ENCODE measurements at regions of chr13 and their contacts with region 1.

Region 1: DNA sequence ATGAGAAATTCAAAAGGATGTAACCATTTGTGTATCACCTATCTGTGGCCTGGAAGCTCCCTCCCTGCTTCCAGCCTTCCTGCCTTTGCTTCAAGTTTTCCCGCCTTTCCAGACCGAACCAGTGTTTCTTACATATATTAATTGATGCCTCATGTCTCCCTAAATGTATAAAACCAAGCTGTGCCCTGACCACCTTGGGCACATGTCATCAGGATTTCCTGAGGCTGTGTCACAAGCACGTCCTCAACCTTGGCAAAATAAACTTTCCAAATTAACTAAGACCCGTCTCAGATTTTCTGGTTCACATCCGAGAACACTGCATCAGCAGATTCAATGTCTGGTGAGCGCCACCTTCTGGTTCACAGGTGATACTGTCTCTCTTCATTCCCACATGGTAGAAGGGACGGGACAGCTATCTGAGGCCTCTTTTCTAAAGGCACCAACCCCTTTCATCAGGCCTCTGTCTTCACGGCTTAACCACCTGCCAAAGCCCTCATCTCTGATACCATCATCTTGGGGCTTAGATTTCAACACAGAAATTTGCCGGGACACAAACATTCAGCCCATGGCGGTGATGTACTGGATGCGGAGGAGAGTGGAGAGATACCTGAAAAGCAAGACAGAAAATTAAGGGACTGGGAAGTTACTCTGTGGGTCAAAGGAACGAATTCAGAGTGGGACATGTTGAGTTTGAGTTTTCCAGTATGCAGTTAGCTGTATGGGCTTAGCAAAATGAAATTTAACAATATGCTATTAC is 58.7 kb upstream of the PABPC3 start:
- DNase-seq: peak in 8 of 9 experiments; percentile 11 to 66 (median 36)
- ATAC-seq: peak; percentile 36
- H3K4me3 ChIP-seq: no peak overlapping the region
- H3K4me3 Mint-ChIP-seq: no peak overlapping the region
- H3K27ac ChIP-seq: no peak overlapping the region
- H3K27ac Mint-ChIP-seq: no peak overlapping the region
- H3K4me1 ChIP-seq: no peaks in the 10 kb centered on the region
- H3K4me1 Mint-ChIP-seq: no peaks in the 10 kb centered on the region
- H3K27me3 ChIP-seq: peaks cover 0 to 2% of the 10 kb centered on the region in 2 experiments
- H3K27me3 Mint-ChIP-seq: peaks cover 37% of the 10 kb centered on the region
- CTCF ChIP-seq: peak; percentile 61

Region 2: DNA sequence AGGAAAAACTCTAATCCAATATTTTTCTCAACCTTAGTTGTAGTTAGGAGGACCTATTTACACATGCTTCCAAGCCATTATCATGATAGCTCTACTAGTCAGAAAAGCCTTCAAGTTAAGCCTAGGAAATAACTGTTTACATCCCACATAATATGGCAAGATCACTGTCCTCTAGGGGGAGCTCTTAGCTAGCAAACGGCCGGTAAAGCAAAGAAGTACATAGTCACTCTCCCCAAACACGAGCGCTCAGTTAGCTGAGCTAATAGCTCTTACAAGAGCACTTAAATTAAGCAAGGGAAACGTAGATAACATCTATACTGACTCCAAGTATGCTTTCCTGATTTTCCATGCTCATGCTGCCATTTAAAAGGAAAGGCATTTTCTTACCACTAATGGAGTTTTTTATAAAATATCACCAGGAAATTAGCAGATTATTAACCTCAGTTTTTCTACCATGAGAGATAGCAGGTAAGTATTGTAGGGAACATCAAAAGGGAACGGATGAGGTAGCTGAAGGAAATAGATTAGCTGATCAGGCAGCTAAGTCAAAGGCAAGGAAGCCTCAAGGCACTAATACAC is 41.9 kb before region 1 on chr13:
- CTCF ChIA-PET with region 1: interaction called, 4 read pairs
- POLR2A ChIA-PET with region 1: interaction called, 3 read pairs
- intact Hi-C with region 1: loop called (anchors 2 kb)
- DNase-seq: peak in 8 of 9 experiments; percentile 28 to 77 (median 60)
- ATAC-seq: peak; percentile 52
- H3K4me3 ChIP-seq: no peak overlapping the region
- H3K4me3 Mint-ChIP-seq: no peak overlapping the region
- H3K27ac ChIP-seq: no peak overlapping the region
- H3K27ac Mint-ChIP-seq: no peak overlapping the region
- H3K4me1 ChIP-seq: no peaks in the 10 kb centered on the region
- H3K4me1 Mint-ChIP-seq: peaks cover 3% of the 10 kb centered on the region
- H3K27me3 ChIP-seq: peaks cover 0 to 2% of the 10 kb centered on the region in 2 experiments
- H3K27me3 Mint-ChIP-seq: peaks cover 31% of the 10 kb centered on the region
- CTCF ChIP-seq: peak; percentile 80

Region 3: GRCh38 chr13:25001476-25002206 is 35.6 kb before region 1 on chr13:
- CTCF ChIA-PET with region 1: interaction called, 4 read pairs
- POLR2A ChIA-PET with region 1: interaction called, 3 read pairs
- intact Hi-C with region 1: loop called in 1 of 2 experiments (anchors 1 kb)
- DNase-seq: no peak
- ATAC-seq: no peak
- H3K4me3 ChIP-seq: no peak overlapping the region
- H3K4me3 Mint-ChIP-seq: no peak overlapping the region
- H3K27ac ChIP-seq: no peak overlapping the region
- H3K27ac Mint-ChIP-seq: no peak overlapping the region
- H3K4me1 ChIP-seq: no peaks in the 10 kb centered on the region
- H3K4me1 Mint-ChIP-seq: peaks cover 3% of the 10 kb centered on the region
- H3K27me3 ChIP-seq: no peaks in the 10 kb centered on the region
- H3K27me3 Mint-ChIP-seq: peaks cover 44% of the 10 kb centered on the region
- CTCF ChIP-seq: no peak